ENCODE measurements at regions of chr17 and their contacts with region 1.

Region 1: DNA sequence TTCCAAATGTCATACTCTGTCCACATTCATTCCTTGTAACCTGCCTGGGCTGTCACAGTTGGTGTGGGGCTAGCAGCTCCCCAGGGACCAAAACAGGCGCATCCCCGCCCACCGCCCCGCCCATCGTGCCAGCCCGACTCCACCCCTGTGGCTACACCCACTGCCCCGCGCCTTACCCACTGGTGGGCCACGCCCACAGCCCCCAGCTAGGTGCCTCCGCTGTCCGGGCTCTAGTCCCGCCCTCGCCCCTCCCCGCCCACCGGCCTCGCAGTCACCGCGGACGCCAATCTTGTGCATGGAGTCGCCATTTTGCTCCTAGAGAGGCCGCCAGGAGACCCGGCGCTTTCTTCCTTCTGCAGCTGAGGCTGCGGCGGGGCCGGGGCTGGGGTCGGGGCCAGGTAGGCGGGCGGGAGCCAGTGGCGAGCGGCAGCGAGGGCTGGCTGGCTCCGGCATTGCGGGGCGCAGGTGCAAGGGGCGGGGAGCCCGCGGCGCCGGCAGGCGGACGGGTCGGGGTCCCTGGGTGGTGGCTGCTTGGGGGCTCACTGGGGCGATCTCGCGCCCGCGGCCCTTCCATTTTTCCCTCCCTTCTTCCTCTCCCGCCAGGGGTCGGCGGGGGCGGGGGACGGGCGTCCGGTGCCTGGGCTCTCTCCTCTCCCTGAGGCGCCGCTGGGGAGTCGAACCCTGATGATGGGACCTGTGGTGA is at the start of gene PRPSAP2:
- DNase-seq: peak; percentile 94
- ATAC-seq: peak; percentile 78
- H3K4me3 Mint-ChIP-seq: peak within 1 kb of the TSS; percentile 87
- H3K27ac Mint-ChIP-seq: peak within 1 kb of the TSS; percentile 77
- H3K4me1 Mint-ChIP-seq: peaks cover 52% of the 10 kb centered on the region
- H3K27me3 Mint-ChIP-seq: no peaks in the 10 kb centered on the region
- total RNA-seq, gene PRPSAP2: 51.6 to 63.4 TPM

Region 2: DNA sequence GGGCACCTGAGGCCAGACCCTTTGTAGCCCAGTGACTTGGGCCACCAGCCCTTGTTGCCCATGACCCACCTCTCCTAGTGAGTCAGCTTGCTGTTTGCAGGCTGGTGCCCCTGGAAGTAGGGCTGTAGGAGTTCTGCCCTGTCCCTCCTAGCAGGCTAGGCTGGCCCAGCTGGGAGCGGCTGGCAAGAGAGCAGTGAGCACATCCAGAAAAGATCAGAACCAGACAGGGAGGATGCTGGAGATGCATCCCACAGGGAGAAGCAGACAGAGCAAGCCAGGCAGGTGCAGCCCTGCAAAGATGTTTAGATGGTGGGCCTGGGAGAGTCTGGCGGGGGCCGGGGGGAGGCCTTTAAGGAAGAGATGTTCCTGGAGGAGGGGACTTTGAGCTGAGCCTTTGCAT is 96.3 kb after region 1 on chr17:
- POLR2A ChIA-PET with region 1: interaction called, 15 read pairs
- DNase-seq: no peak
- ATAC-seq: no peak
- H3K4me3 Mint-ChIP-seq: no peak overlapping the region
- H3K27ac Mint-ChIP-seq: peak overlapping the region; percentile 46
- H3K4me1 Mint-ChIP-seq: peaks cover 19% of the 10 kb centered on the region
- H3K27me3 Mint-ChIP-seq: no peaks in the 10 kb centered on the region

Measured in activated naive CD8-positive, alpha-beta T cell treated with anti-CD3 and anti-CD28 coated beads, Interleukin-2, amount 10 ng/mL, durations not matched to agents 7 days and 5 days (primary cell).